Heart left ventricle (tissue), 16 donors: ENCODE measurements at regions of chr20 and their contacts with region 1.

Region 1: GRCh38 chr20:17014217-17014616 is 212.6 kb upstream of the PCSK2 start:
- DNase-seq: no peak
- ATAC-seq: no peak
- H3K4me3 ChIP-seq: no peak overlapping the region
- H3K27ac ChIP-seq: no peak overlapping the region
- H3K4me1 ChIP-seq: no peaks in the 10 kb centered on the region
- H3K27me3 ChIP-seq: peaks cover 0 to 2% (median 0%) of the 10 kb centered on the region in 9 donors
- CTCF ChIP-seq: no peak
- POLR2A ChIP-seq: no peak

Region 2: DNA sequence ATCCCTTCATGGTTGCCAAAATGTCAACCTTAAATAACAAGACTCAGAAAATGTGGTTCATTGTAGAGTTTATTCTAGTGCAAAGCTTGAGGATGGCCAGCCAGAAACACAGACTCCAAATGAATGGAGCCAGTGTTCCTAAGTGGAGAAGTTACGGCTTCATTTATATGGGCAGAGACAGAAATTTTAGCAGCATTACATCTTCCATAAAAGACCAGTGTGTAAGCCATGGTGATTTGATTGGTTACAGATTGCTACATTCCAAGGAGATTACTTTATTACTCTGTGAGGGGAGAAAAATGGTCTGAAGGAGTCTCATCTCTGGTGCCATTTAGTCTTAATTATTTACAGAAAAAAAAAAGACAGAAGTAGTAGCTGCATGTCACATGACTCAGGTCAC is 168.2 kb before region 1 on chr20:
- intact Hi-C with region 1: no loop called
- DNase-seq: no peak
- ATAC-seq: peak in 1 of 4 donors; percentile 34
- H3K4me3 ChIP-seq: no peak overlapping the region
- H3K27ac ChIP-seq: no peak overlapping the region
- H3K4me1 ChIP-seq: no peaks in the 10 kb centered on the region
- H3K27me3 ChIP-seq: no peaks in the 10 kb centered on the region
- CTCF ChIP-seq: no peak
- POLR2A ChIP-seq: no peak

Region 3: GRCh38 chr20:17077030-17077429 is 62.8 kb after region 1 on chr20:
- intact Hi-C with region 1: loop called in 1 of 10 experiments (anchors 10 kb)
- DNase-seq: no peak
- ATAC-seq: no peak
- H3K4me3 ChIP-seq: no peak overlapping the region
- H3K27ac ChIP-seq: no peak overlapping the region
- H3K4me1 ChIP-seq: no peaks in the 10 kb centered on the region
- H3K27me3 ChIP-seq: no peaks in the 10 kb centered on the region
- CTCF ChIP-seq: no peak
- POLR2A ChIP-seq: no peak

Region 4: DNA sequence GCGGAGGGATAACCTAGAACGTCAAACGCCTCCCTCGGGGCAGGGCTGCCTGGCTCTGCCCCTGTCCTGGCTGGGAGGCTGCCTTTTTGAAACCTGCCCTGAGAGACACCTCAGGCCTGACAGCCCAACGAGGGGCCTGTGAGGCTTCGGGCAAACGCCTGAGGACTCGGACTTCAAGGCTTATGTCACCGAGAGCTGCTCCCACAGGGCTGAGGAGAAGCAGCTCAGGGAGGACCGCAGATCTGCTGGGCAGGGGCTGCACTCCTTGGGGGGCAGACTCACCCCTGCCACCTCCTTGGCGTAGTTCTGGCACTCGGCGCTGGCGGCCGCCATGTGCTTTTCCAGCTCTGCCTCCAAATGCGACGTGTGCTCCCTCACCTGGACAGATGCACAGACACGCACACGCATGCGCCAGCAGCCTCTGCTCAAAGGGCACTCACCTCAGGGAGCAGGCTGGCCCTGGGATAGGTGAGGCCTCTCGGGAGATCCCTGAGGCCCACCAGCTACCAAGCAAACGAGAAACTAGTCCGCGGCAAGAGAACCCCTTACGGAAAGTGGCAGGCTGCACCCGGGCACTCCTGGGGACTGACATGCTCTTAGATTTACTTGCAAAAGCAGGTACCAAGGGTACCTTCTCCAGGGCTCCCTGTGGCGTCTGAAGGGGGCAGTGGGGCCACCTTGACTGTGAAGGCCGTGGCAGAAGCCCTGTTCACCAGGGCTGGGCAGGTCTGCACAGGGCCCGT is 605.3 kb after region 1 on chr20:
- intact Hi-C with region 1: no loop called
- DNase-seq: peak in 3 of 5 donors; percentile 16 to 56 (median 17)
- ATAC-seq: no peak
- H3K4me3 ChIP-seq: no peak overlapping the region
- H3K27ac ChIP-seq: no peak overlapping the region
- H3K4me1 ChIP-seq: peaks cover 0 to 32% (median 15%) of the 10 kb centered on the region in 12 donors
- H3K27me3 ChIP-seq: no peaks in the 10 kb centered on the region
- CTCF ChIP-seq: no peak
- POLR2A ChIP-seq: no peak